GM18951 (cell line): ENCODE measurements at regions of chr12 and their contacts with region 1.

Region 1: GRCh38 chr12:53061404-53062010 is 11.6 kb downstream of the TNS2 start:
- POLR2A ChIP-seq: no peak

Region 2: GRCh38 chr12:53098982-53099651 is 37.6 kb after region 1 on chr12:
- in situ Hi-C with region 1: loop called (anchors 5 kb)
- POLR2A ChIP-seq: no peak